ENCODE measurements at regions of chr1 and their contacts with region 1.

Region 1: GRCh38 chr1:119565131-119565772 is 58.2 kb downstream of the HSD3B1 start:
- DNase-seq: no peak
- H3K4me3 ChIP-seq: no peak overlapping the region
- H3K27ac ChIP-seq: no peak overlapping the region
- H3K4me1 ChIP-seq: no peaks in the 10 kb centered on the region
- H3K27me3 ChIP-seq: no peaks in the 10 kb centered on the region; a peak in 1 of 7 replicates
- CTCF ChIP-seq: no peak
- EP300 ChIP-seq: no peak
- POLR2A ChIP-seq: no peak
- RAD21 ChIP-seq: no peak

Region 2: GRCh38 chr1:119506951-119507350 is 58.3 kb before region 1 on chr1 and contains the start of gene HSD3B1:
- CTCF ChIA-PET with region 1: no interaction called
- POLR2A ChIA-PET with region 1: no interaction called
- DNase-seq: no peak
- H3K4me3 ChIP-seq: no peak within 1 kb of the TSS
- H3K27ac ChIP-seq: no peak within 1 kb of the TSS
- H3K4me1 ChIP-seq: no peaks in the 10 kb centered on the region
- H3K27me3 ChIP-seq: no peaks in the 10 kb centered on the region
- CTCF ChIP-seq: no peak
- EP300 ChIP-seq: no peak
- POLR2A ChIP-seq: no peak
- RAD21 ChIP-seq: no peak
- total RNA-seq, gene HSD3B1: not detected in 2 replicates

Region 3: DNA sequence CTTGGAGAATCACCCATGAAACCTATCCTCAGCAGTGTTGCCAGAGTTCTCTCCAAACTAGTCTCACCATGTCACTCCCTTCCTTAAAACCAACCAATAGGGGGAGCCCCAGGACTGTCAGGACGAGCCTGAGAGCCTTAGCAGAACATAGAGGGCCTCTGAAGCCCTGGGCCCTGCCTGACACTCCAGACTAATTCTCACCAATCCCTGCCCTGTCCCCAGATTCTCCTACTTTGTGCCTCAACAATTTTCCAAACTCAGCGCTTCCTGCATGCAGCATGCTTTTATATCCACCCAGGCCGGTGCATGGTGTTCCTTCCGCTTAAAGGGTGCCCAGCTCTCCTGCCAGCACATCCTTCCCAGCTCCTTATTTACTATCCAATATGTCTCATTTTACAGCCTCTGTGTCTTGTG is 15.5 kb before region 1 on chr1:
- CTCF ChIA-PET with region 1: interaction called, 13 read pairs
- POLR2A ChIA-PET with region 1: interaction called, 3 read pairs
- DNase-seq: peak; percentile 19 to 75
- H3K4me3 ChIP-seq: no peak overlapping the region
- H3K27ac ChIP-seq: no peak overlapping the region
- H3K4me1 ChIP-seq: no peaks in the 10 kb centered on the region
- H3K27me3 ChIP-seq: no peaks in the 10 kb centered on the region
- CTCF ChIP-seq: peak; percentile 56 to 77 (median 74)
- EP300 ChIP-seq: no peak
- POLR2A ChIP-seq: no peak
- RAD21 ChIP-seq: peak; percentile 80 to 81

Region 4: DNA sequence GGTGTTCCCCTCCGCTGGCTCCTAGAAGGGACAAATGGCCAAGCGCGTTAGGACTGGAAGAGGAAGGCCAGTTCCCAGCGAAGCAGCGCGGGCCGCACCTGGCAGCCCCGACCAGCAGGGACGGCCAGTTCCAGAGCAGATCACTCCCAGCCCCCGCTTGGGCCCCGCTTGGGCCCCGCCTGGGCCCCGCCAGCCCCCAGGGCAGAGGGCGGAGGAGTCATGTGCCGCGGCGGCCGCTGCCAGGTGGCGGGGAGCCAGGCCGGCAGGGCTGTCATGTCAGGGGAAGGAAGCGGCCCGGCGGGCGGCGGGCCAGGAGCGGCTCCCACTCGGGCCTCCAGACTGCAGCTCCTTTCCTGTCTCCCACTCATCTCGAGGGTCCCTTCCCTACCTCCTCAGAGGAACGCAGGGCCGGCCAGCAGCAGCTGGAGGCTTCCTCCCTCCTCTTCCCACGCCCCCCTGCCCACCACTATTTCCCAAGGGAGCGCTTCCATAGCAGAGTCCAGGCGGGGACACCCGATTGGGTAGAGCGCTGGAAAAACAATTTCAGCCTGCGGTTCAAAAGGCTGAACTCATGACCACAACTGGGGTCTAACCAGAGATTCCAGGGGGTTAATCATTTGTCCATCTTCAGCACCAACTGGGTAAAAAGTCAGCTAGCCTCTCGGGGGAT is 66.3 kb after region 1 on chr1:
- CTCF ChIA-PET with region 1: no interaction called
- POLR2A ChIA-PET with region 1: no interaction called
- DNase-seq: peak in 1 of 2 experiments; percentile 67
- H3K4me3 ChIP-seq: peak overlapping the region in 1 of 4 experiments; percentile 34; a peak in 2 of 8 replicates
- H3K27ac ChIP-seq: no peak overlapping the region
- H3K4me1 ChIP-seq: peaks cover 0 to 6% (median 3%) of the 10 kb centered on the region in 4 experiments; a peak in 4 of 7 replicates
- H3K27me3 ChIP-seq: no peaks in the 10 kb centered on the region
- CTCF ChIP-seq: no peak
- EP300 ChIP-seq: no peak
- POLR2A ChIP-seq: no peak
- RAD21 ChIP-seq: no peak

Measured in H1 (cell line).